Caco-2 (cell line): ENCODE measurements at regions of chr11 and their contacts with region 1.

Region 1: GRCh38 chr11:74602637-74603556 is 10.5 kb downstream of the POLD3 start:
- DNase-seq: no peak
- H3K4me3 ChIP-seq: no peak overlapping the region
- H3K4me3 Mint-ChIP-seq: no peak overlapping the region
- H3K27ac Mint-ChIP-seq: no peak overlapping the region
- H3K4me1 ChIP-seq: no peaks in the 10 kb centered on the region; the same call in 1 of the 2 replicates
- H3K4me1 Mint-ChIP-seq: no peaks in the 10 kb centered on the region
- H3K27me3 ChIP-seq: no peaks in the 10 kb centered on the region
- H3K27me3 Mint-ChIP-seq: no peaks in the 10 kb centered on the region
- CTCF ChIP-seq: no peak

Region 2: GRCh38 chr11:73164803-73165540 is 1437.9 kb before region 1 on chr11:
- CTCF ChIA-PET with region 1: no interaction called
- POLR2A ChIA-PET with region 1: no interaction called
- intact Hi-C with region 1: loop called (anchors 10 kb)
- DNase-seq: peak in 1 of 2 experiments; percentile 19
- H3K4me3 ChIP-seq: no peak overlapping the region
- H3K4me3 Mint-ChIP-seq: no peak overlapping the region
- H3K27ac Mint-ChIP-seq: no peak overlapping the region
- H3K4me1 ChIP-seq: peaks cover 22% of the 10 kb centered on the region
- H3K4me1 Mint-ChIP-seq: peaks cover 14% of the 10 kb centered on the region
- H3K27me3 ChIP-seq: no peaks in the 10 kb centered on the region
- H3K27me3 Mint-ChIP-seq: no peaks in the 10 kb centered on the region
- CTCF ChIP-seq: no peak

Region 3: DNA sequence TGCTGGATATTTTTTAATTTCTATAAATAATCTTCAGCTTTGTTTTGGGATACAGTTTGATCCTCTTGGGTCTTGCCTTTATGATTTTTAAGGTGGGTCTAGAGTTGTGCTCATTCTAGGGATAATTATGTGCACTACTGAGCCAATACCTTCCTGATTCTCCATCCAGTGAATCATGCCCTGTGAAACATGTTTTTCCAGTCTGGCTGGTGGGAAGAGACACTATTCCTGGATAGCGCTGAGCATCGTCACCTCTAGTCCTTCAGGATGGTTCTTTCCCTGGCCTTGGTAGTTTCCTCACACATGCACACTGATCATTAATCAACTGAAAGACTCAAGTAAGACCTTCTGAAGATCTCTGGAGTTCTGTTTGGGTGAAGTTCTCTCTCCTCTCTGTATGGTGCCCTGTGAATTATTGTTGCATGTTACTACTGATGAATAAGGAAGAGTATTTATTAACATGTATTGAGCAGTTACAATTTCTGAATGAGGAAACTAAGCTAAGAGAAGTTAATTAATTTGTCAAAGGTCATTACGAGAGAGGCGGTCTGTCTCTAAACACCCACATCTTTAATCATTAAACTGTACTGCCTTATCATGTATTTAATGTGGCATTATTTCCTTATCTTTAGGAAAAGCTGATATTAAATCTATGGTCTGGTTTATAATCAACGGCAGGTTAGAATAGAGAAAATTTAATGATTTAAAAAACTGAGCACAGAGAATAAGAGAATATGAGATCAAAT is 70.2 kb before region 1 on chr11:
- CTCF ChIA-PET with region 1: no interaction called
- POLR2A ChIA-PET with region 1: no interaction called
- intact Hi-C with region 1: no loop called
- DNase-seq: peak in 1 of 2 experiments; percentile 55
- H3K4me3 ChIP-seq: no peak overlapping the region
- H3K4me3 Mint-ChIP-seq: no peak overlapping the region
- H3K27ac Mint-ChIP-seq: no peak overlapping the region
- H3K4me1 ChIP-seq: peaks cover 25% of the 10 kb centered on the region
- H3K4me1 Mint-ChIP-seq: peaks cover 32% of the 10 kb centered on the region
- H3K27me3 ChIP-seq: no peaks in the 10 kb centered on the region
- H3K27me3 Mint-ChIP-seq: no peaks in the 10 kb centered on the region
- CTCF ChIP-seq: no peak

Region 4: GRCh38 chr11:74620531-74620930 is 17.6 kb after region 1 on chr11:
- CTCF ChIA-PET with region 1: no interaction called
- POLR2A ChIA-PET with region 1: no interaction called
- intact Hi-C with region 1: no loop called
- DNase-seq: no peak
- H3K4me3 ChIP-seq: no peak overlapping the region
- H3K4me3 Mint-ChIP-seq: no peak overlapping the region
- H3K27ac Mint-ChIP-seq: no peak overlapping the region
- H3K4me1 ChIP-seq: no peaks in the 10 kb centered on the region; the same call in 1 of the 2 replicates
- H3K4me1 Mint-ChIP-seq: peaks cover 5% of the 10 kb centered on the region
- H3K27me3 ChIP-seq: no peaks in the 10 kb centered on the region
- H3K27me3 Mint-ChIP-seq: no peaks in the 10 kb centered on the region
- CTCF ChIP-seq: no peak

Region 5: DNA sequence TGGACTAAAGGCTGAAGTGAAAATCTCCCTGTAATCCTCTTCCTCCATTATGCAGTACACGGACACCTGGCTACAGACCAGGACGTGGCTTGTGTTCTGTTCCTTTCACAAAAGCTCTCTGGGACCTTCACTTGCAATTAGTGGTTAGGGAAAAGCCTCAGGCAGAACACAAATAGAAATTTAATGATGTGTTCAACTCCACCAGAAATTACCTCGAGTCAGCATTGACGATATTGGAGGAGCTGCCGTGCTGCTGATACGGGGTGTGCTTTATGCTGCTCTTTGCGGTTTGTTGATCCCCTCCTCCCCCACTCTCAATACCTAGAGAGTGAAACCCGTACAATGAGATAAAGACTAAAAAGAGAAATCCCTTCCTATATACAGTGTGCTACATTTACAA is 38.4 kb after region 1 on chr11:
- CTCF ChIA-PET with region 1: no interaction called
- POLR2A ChIA-PET with region 1: no interaction called
- intact Hi-C with region 1: no loop called
- DNase-seq: no peak
- H3K4me3 ChIP-seq: no peak overlapping the region
- H3K4me3 Mint-ChIP-seq: no peak overlapping the region
- H3K27ac Mint-ChIP-seq: no peak overlapping the region
- H3K4me1 ChIP-seq: no peaks in the 10 kb centered on the region
- H3K4me1 Mint-ChIP-seq: no peaks in the 10 kb centered on the region
- H3K27me3 ChIP-seq: no peaks in the 10 kb centered on the region
- H3K27me3 Mint-ChIP-seq: no peaks in the 10 kb centered on the region
- CTCF ChIP-seq: no peak

Region 6: DNA sequence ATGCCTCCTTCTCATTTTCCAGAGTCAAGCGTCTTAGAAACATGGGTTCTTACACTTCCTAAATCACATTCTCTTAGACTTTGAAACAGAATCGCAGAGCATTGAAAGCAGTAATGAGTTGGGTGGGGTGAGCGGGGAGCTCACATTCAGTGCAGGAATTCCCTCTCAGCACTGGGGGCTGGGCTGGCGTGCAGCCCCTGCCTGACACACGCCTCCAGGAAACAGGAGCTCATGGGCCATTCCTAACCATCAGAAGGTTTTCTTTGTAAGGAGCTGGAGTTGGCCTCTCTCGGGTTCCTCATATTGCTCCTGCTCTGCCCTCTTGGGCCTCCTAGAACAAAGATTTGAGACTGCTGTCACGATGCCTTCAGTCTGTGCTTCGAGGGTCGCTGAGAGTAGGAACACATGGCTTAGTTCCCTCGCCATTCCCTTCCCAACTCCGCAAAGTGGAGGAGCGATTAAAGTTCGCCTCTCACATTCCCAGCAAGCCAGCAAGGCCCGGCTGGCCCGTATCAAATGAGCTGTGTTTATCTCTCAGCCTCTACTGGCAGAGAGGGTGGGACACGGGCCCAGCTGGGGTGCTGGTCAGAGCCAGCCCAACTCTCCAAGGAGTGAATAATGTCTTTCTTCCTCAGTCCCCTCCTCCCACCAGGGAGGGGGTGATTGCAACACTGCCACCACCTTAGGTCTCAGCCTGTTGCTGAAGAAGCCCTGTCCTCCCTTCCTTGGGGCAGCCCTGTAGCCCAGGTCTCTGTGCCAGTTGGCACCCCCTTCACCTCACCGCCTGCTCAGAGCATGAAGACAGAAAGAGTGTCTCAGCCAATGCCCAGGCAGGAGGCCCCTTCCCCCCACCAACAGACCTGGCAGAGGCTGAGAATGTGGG is 117.9 kb after region 1 on chr11:
- CTCF ChIA-PET with region 1: no interaction called
- POLR2A ChIA-PET with region 1: no interaction called
- intact Hi-C with region 1: no loop called
- DNase-seq: no peak
- H3K4me3 ChIP-seq: no peak overlapping the region
- H3K4me3 Mint-ChIP-seq: no peak overlapping the region
- H3K27ac Mint-ChIP-seq: no peak overlapping the region
- H3K4me1 ChIP-seq: 0 out of 2 replicates have a peak, but pooled peaks cover 7% of the 10 kb centered on the region
- H3K4me1 Mint-ChIP-seq: peaks cover 13% of the 10 kb centered on the region
- H3K27me3 ChIP-seq: no peaks in the 10 kb centered on the region
- H3K27me3 Mint-ChIP-seq: no peaks in the 10 kb centered on the region
- CTCF ChIP-seq: no peak